Activated CD4-positive, alpha-beta T cell treated with anti-CD3 and anti-CD28 coated beads, Interleukin-2, amount 10 ng/mL, durations not matched to agents 24 days and 14 days (primary cell): ENCODE measurements at regions of chr10 and their contacts with region 1.

Region 1: GRCh38 chr10:79242620-79243152 is 104.6 kb upstream of the PPIF start:
- DNase-seq: peak; percentile 91
- H3K4me3 Mint-ChIP-seq: peak overlapping the region; percentile 86
- H3K27ac Mint-ChIP-seq: peak overlapping the region; percentile 89
- H3K4me1 Mint-ChIP-seq: peaks cover 57% of the 10 kb centered on the region
- H3K27me3 Mint-ChIP-seq: no peaks in the 10 kb centered on the region

Region 2: DNA sequence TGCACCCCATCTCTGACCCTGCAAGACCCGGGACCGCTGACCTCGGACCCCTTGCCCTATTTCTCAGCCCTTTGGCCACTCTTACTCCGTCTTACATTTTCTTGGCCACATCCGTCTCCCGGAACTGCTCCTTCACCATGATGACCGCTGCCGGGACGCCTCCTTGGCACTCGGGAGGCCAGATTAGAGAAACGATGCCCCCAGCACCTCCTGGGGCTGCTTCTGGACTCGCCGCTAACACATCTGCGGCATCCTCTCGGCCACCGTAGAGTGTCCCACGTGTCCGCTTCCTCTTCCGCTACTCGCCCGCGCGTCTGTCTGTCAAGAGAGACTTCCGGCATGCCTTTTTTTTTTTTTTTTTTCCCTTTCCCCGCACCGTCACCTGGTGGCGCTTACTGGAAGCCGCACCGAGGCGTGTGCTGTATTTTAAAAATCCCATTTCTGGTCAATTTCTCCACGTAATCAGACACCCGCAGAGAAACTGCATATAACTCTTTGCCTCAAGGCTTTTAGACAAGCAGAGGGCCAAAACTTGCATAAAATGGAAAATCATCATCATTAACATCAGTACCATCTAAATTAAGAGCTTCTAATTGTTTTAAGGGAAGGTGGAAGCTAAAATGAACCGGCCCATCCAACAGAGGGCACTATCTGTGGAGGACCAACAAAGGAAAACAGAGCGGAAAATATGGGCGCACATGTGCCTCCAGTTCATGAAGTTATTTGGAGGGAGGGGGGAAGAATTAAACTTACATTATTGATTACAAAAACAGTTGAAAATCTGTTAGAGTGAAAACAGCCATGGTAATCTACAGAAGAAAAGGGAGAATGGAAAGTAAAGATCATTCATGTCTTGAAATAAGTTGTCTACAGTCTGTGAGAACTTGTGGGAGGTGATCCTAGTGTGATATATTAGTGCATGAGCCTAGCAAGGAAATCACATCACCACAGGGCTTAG is 1213.1 kb before region 1 on chr10 and contains the start of gene POLR3A:
- intact Hi-C with region 1: loop called (anchors 5 kb)
- DNase-seq: peak; percentile 97
- H3K4me3 Mint-ChIP-seq: peak within 1 kb of the TSS; percentile 99
- H3K27ac Mint-ChIP-seq: peak within 1 kb of the TSS; percentile 95
- H3K4me1 Mint-ChIP-seq: peaks cover 24% of the 10 kb centered on the region
- H3K27me3 Mint-ChIP-seq: no peaks in the 10 kb centered on the region
- total RNA-seq, gene POLR3A: 27.8 and 28.7 TPM in 2 replicates

Region 3: GRCh38 chr10:78972947-78973900 is 269.5 kb before region 1 on chr10:
- intact Hi-C with region 1: loop called (anchors 1 kb)
- DNase-seq: peak; percentile 93
- H3K4me3 Mint-ChIP-seq: peak overlapping the region; percentile 70
- H3K27ac Mint-ChIP-seq: peak overlapping the region; percentile 91
- H3K4me1 Mint-ChIP-seq: peaks cover 40% of the 10 kb centered on the region
- H3K27me3 Mint-ChIP-seq: peaks cover 5% of the 10 kb centered on the region

Region 4: DNA sequence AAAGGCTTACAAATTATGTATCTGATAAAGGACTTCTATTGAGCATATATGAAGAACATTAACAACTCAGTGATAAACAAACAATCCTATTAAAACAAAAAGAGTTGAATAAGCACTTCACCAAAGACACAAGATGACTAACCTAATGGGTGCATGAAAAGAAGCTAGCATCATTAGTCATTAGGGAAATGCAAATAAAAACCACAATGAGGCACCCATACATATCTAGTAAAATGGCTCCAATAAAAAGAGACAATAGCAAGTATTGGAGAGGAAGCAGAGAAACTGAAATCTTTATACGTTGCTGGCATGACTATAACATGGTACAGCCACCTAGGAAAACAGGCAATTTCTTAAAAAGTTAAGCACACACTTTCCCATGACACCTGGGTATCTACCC is 251.5 kb before region 1 on chr10:
- intact Hi-C with region 1: no loop called
- DNase-seq: no peak
- H3K4me3 Mint-ChIP-seq: no peak overlapping the region
- H3K27ac Mint-ChIP-seq: no peak overlapping the region
- H3K4me1 Mint-ChIP-seq: peaks cover 3% of the 10 kb centered on the region
- H3K27me3 Mint-ChIP-seq: peaks cover 8% of the 10 kb centered on the region

Region 5: DNA sequence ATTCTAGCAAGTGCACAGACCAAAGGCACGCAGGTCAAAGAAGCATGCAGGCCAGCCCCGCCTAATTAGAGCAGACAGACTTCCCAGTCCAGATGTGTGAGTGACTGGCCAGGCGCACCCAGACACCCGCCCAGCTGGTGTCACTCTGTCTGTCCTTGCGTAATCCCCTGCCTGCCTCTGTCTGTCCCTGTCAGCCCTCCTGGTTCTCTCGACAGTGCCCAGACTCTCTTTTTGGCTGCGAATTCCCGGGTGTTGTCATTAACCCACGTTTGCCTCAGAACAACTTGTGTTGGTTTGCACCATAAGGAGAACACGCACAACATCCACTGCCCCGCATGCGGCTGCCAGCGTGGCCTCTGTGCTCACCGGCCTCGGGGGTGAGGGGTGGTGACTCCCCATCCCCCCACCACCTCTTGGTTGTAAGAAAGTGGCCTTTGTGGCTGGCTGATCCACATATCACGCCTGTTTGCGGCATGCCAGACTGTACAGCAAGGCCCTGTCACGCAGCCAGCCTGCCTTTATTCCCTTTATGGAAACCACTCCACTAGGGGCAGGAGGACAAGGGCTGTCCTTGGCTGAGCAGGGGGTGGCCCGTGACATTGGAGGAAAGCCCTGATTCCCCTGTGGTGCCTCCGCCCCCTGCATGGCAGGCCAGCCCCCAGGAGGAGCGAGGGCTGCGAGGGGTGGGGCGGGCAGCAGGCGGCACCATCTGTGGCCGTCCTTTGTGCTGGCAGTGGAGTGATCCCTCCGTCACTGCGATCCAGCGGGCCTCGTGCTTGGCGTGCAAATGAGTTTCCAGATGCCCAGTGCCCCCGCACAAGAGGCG is 31.8 kb after region 1 on chr10:
- intact Hi-C with region 1: no loop called
- DNase-seq: no peak
- H3K4me3 Mint-ChIP-seq: no peak overlapping the region
- H3K27ac Mint-ChIP-seq: no peak overlapping the region
- H3K4me1 Mint-ChIP-seq: peaks cover 6% of the 10 kb centered on the region
- H3K27me3 Mint-ChIP-seq: no peaks in the 10 kb centered on the region

Region 6: DNA sequence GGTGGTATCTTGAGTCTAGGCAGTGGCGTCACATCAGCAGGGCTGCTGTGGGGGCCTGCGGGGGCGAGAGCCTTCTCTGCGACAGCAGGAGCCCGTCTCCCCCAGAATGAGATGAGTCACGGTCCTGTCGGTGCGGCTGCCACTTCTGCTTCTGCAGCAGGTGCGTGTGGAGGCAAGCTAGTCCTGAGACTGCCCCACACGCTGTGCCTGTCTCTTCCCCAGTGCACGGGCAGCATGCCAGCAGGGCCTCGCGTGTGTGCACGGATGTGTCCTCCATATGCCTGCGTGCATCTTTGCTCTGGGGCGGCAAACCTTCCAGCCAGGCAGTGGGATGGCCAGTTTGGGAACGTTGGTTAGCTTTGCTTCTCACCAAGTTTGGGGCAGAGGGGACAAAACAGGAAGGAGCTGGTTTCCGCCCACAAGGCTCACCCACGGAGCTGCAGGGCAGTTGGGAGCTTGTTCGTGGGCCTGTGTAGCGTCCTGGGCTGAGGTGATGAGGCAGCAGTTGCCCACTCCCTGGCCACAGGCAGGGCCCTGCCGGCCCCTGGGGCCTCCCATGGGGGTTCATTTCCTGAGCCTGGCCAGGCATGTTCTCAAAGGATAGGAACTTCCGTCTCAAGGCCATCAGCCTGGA is 43.7 kb after region 1 on chr10:
- intact Hi-C with region 1: loop called (anchors 1 kb)
- DNase-seq: peak; percentile 90
- H3K4me3 Mint-ChIP-seq: peak overlapping the region; percentile 76
- H3K27ac Mint-ChIP-seq: peak overlapping the region; percentile 97
- H3K4me1 Mint-ChIP-seq: peaks cover 55% of the 10 kb centered on the region
- H3K27me3 Mint-ChIP-seq: no peaks in the 10 kb centered on the region

Region 7: GRCh38 chr10:79322616-79323543 is 80.2 kb after region 1 on chr10:
- intact Hi-C with region 1: loop called (anchors 2 kb)
- DNase-seq: peak; percentile 93
- H3K4me3 Mint-ChIP-seq: peak overlapping the region; percentile 80
- H3K27ac Mint-ChIP-seq: peak overlapping the region; percentile 98
- H3K4me1 Mint-ChIP-seq: peaks cover 73% of the 10 kb centered on the region
- H3K27me3 Mint-ChIP-seq: no peaks in the 10 kb centered on the region

Region 8: GRCh38 chr10:79445141-79445976 is 202.7 kb after region 1 on chr10 and contains the start of gene ZCCHC24:
- intact Hi-C with region 1: loop called (anchors 5 kb)
- DNase-seq: peak; percentile 98
- H3K4me3 Mint-ChIP-seq: peak within 1 kb of the TSS; percentile 86
- H3K27ac Mint-ChIP-seq: peak within 1 kb of the TSS; percentile 66
- H3K4me1 Mint-ChIP-seq: peaks cover 22% of the 10 kb centered on the region
- H3K27me3 Mint-ChIP-seq: peaks cover 44% of the 10 kb centered on the region
- total RNA-seq, gene ZCCHC24: 0.66 and 1.4 TPM in 2 replicates